ENCODE measurements at regions of chr3 and their contacts with region 1.

Region 1: GRCh38 chr3:40476478-40477470 is at the start of gene ZNF619:
- DNase-seq: peak in 1 of 2 experiments; percentile 80
- H3K4me3 ChIP-seq: peak within 1 kb of the TSS; percentile 36 to 88 (median 64)
- H3K27ac ChIP-seq: peak within 1 kb of the TSS; percentile 67; the same call in 1 of the 2 replicates
- H3K4me1 ChIP-seq: peaks cover 0 to 8% (median 3%) of the 10 kb centered on the region in 4 experiments; a peak in 2 of 7 replicates
- H3K27me3 ChIP-seq: no peaks in the 10 kb centered on the region
- CTCF ChIP-seq: no peak
- EP300 ChIP-seq: no peak
- POLR2A ChIP-seq: peak in 1 of 2 experiments; percentile 60; a peak in 2 of 3 replicates
- RAD21 ChIP-seq: no peak
- total RNA-seq, gene ZNF619: 7.0 and 8.2 TPM in 2 replicates

Region 2: GRCh38 chr3:40524568-40525285 is 48.0 kb after region 1 on chr3 and contains the start of gene ZNF621:
- CTCF ChIA-PET with region 1: no interaction called
- POLR2A ChIA-PET with region 1: interaction called, 22 read pairs
- DNase-seq: peak; percentile 39 to 94
- H3K4me3 ChIP-seq: peak within 1 kb of the TSS; percentile 83 to 85 (median 84)
- H3K27ac ChIP-seq: peak within 1 kb of the TSS; percentile 95
- H3K4me1 ChIP-seq: peaks cover 0 to 4% (median 0%) of the 10 kb centered on the region in 4 experiments; a peak in 2 of 7 replicates
- H3K27me3 ChIP-seq: no peaks in the 10 kb centered on the region
- CTCF ChIP-seq: no peak; a peak in 1 of 4 replicates
- EP300 ChIP-seq: no peak
- POLR2A ChIP-seq: peak; percentile 97 to 99
- RAD21 ChIP-seq: peak in 1 of 2 experiments; percentile 23; a peak in 1 of 4 replicates
- total RNA-seq, gene ZNF621: 15.4 and 15.8 TPM in 2 replicates

Measured in H1 (cell line).